ENCODE measurements at regions of chr20 and their contacts with region 1.

Region 1: DNA sequence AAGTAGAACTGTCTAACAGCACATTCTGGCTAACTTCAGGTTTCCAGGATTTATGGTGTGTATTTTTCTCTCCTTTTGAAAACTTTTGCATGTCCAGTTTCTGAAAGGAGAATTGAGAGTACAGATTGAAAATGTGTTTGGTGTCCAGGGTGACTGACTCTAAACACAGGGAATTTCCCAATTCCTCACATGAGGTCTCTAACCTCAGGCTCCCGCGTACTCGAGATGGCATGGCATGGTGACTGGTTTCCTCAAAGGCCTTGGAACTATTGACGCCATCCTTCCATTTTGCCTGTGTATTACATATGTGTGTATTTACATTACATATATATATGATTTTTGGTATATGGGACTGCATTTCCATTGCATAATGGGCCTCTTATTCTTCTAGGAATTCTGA is 52.5 kb downstream of the PRND start:
- DNase-seq: no peak
- H3K4me3 ChIP-seq: no peak overlapping the region
- H3K27ac ChIP-seq: no peak overlapping the region
- H3K4me1 ChIP-seq: no peaks in the 10 kb centered on the region
- H3K27me3 ChIP-seq: no peaks in the 10 kb centered on the region
- CTCF ChIP-seq: no peak
- POLR2A ChIP-seq: no peak

Region 2: GRCh38 chr20:4820806-4821518 is 46.8 kb after region 1 on chr20:
- intact Hi-C with region 1: no loop called
- DNase-seq: no peak
- H3K4me3 ChIP-seq: peak overlapping the region in 1 of 3 donors; percentile 3
- H3K27ac ChIP-seq: peak overlapping the region in 1 of 2 donors; percentile 25
- H3K4me1 ChIP-seq: peaks cover 5 to 8% of the 10 kb centered on the region in 2 donors
- H3K27me3 ChIP-seq: peaks cover 0 to 3% of the 10 kb centered on the region in 2 donors
- CTCF ChIP-seq: no peak
- POLR2A ChIP-seq: no peak

Region 3: GRCh38 chr20:5090191-5090590 is 316.0 kb after region 1 on chr20:
- intact Hi-C with region 1: loop called (anchors 10 kb)
- DNase-seq: no peak
- H3K4me3 ChIP-seq: no peak overlapping the region
- H3K27ac ChIP-seq: no peak overlapping the region
- H3K4me1 ChIP-seq: no peaks in the 10 kb centered on the region
- H3K27me3 ChIP-seq: no peaks in the 10 kb centered on the region
- CTCF ChIP-seq: no peak
- POLR2A ChIP-seq: no peak